BJ (cell line): ENCODE measurements at regions of chr3 and their contacts with region 1.

Region 1: GRCh38 chr3:129576514-129577352 is 29.7 kb downstream of the PLXND1 start:
- DNase-seq: no peak
- H3K4me3 ChIP-seq: no peak overlapping the region
- H3K27me3 ChIP-seq: no peaks in the 10 kb centered on the region
- CTCF ChIP-seq: no peak

Region 2: DNA sequence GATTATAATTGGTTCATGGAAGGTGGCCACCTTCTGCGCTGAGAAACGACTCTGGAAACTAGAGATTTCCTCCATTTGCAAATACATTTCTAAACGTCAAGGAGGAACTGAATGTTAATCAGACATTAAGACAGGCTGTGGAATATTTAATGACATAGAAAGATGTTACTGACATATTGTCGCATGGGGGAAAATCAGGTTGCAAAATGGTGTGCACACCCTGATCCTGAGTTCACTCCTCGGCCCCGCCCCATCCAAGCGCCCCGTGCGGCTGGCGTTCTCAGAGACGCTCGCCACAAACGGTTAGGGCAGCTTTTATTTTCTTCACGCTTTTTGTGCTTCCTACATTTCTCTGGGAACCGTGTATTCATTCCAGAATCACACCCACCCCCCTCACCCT is 23.0 kb before region 1 on chr3:
- CTCF ChIA-PET with region 1: interaction called, 3 read pairs
- POLR2A ChIA-PET with region 1: interaction called, 14 read pairs
- DNase-seq: no peak
- H3K4me3 ChIP-seq: no peak overlapping the region
- H3K27me3 ChIP-seq: no peaks in the 10 kb centered on the region
- CTCF ChIP-seq: no peak

Region 3: DNA sequence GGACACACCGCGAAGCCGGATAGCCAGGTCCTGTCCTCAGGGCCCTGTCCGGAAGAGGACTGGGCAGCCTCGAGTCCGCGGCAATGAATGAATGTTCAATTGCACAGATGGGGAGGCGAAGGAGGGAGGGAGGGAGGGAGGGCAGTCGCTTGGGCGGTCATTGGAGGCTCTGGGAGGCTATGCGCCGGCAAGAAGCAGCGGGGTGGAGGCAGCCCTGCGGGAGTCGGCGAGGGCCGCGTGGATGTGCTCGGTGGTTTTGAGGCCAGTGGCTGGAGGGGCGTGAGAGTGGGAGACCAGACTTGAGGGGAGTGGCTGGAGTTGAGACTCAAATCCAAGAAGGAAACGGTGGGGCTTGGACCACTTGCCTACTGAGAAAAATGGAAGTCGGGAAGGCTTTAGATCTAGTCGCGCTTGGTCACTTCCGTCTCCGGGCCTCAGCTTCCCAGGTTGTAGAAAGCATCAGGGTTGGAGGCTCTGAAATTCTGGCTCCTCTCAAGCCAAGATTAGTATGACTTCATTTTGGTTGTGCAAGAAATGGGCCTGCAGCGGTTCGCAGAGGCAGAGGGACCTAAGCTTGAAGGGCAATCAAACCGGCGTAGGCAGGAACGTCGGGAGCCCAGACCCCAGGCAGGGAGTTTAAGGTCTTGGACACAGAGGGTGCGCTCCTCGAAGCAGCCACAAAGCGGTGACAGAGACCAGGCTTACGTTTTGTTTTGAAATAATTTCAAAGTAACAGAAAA is 50.9 kb after region 1 on chr3:
- CTCF ChIA-PET with region 1: no interaction called
- POLR2A ChIA-PET with region 1: no interaction called
- DNase-seq: peak; percentile 40
- H3K4me3 ChIP-seq: peak overlapping the region; percentile 38
- H3K27me3 ChIP-seq: no peaks in the 10 kb centered on the region
- CTCF ChIP-seq: peak; percentile 79